A673 (cell line): ENCODE measurements at regions of chr9 and their contacts with region 1.

Region 1: GRCh38 chr9:78044189-78044588 is 12.6 kb upstream of the GNAQ start:
- DNase-seq: no peak
- H3K4me3 ChIP-seq: no peak overlapping the region
- H3K27ac ChIP-seq: no peak overlapping the region
- H3K4me1 ChIP-seq: peaks cover 9% of the 10 kb centered on the region
- H3K27me3 ChIP-seq: no peaks in the 10 kb centered on the region
- CTCF ChIP-seq: no peak

Region 2: DNA sequence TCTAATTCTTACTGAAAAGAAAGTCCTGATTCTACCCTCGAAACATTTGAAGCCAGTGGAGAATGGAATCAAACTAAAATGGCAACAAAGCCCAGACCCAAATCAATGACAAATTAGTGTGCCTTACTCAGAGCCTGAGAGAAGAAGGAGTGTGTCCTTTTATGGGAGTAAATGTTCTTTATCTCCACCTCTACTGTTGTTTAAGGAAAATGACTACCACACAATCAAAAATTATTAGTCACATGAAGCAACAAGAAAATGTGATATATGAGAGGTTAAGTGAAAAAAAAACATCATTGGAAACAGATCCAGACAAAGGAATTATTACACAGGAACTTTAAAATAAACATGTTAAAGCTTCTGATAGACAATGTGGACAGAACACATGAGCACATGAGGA is 1074.5 kb before region 1 on chr9:
- CTCF ChIA-PET with region 1: no interaction called
- POLR2A ChIA-PET with region 1: no interaction called
- intact Hi-C with region 1: no loop called
- DNase-seq: no peak
- H3K4me3 ChIP-seq: no peak overlapping the region
- H3K27ac ChIP-seq: no peak overlapping the region
- H3K4me1 ChIP-seq: no peaks in the 10 kb centered on the region
- H3K27me3 ChIP-seq: peaks cover 47% of the 10 kb centered on the region
- CTCF ChIP-seq: no peak

Region 3: DNA sequence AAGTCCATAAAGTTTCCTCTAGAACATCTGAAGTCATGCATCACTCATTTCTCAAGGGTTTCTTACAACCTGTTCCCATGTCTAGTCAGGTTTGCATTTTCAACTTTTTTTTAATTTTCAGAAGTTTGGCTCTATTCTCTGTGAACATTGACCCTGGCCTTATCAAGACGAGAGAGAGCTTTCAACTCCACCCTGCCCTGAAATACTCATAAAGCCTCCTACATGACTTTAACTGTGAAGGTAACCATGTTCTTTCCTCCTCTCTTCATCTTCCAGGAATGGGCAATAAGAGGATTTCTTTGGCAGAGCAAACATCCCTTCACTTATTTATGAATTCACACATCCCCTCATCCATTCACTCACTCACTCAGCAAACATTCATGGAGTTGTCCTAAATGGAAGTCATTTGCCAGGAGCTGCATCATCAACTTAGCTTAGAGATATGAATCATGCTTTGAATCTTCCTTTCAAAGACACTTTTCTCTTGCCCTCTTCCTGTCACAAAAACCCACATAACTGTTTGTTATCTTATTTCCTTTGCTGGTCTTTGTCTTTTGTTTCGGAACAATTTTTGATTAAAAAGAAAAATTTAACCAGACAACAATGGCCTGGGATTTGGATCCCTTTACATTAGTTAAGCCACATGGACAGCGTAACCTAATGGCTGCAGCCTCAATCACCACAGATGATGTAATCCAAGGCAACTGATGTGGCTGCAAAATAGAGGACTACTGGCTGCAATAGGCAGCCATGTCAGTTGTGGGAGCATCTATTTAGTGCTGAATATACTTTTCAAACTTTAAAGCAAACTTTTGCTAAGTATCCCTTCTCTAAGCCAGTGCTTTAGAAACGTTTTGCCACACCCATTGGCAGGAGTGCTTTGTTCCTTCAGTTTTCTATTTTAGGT is 30.4 kb after region 1 on chr9:
- CTCF ChIA-PET with region 1: no interaction called
- POLR2A ChIA-PET with region 1: no interaction called
- intact Hi-C with region 1: loop called (anchors 5 kb)
- DNase-seq: no peak
- H3K4me3 ChIP-seq: no peak overlapping the region
- H3K27ac ChIP-seq: no peak overlapping the region
- H3K4me1 ChIP-seq: no peaks in the 10 kb centered on the region
- H3K27me3 ChIP-seq: no peaks in the 10 kb centered on the region
- CTCF ChIP-seq: no peak

Region 4: DNA sequence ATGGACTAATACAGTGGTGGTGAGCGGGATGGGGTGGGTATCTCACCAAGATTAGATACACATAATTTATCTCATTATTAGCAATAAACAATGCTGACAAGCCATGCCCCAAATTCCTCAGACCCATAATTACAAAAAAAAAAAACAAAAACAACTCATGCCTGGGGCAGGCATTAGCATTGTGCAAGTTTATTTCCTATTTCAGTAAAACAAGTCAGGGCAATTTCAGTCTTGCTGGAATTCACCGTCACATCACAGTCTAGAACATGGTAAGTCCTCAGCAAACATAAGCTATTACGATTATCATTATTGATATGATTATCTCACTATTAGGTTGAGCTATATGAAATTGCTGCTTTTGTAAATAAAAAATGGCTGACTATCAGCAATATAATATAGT is 44.9 kb after region 1 on chr9:
- CTCF ChIA-PET with region 1: no interaction called
- POLR2A ChIA-PET with region 1: no interaction called
- intact Hi-C with region 1: loop called (anchors 5 kb)
- DNase-seq: no peak
- H3K4me3 ChIP-seq: no peak overlapping the region
- H3K27ac ChIP-seq: no peak overlapping the region
- H3K4me1 ChIP-seq: no peaks in the 10 kb centered on the region
- H3K27me3 ChIP-seq: no peaks in the 10 kb centered on the region
- CTCF ChIP-seq: no peak

Region 5: GRCh38 chr9:78207319-78207718 is 163.1 kb after region 1 on chr9:
- CTCF ChIA-PET with region 1: no interaction called
- POLR2A ChIA-PET with region 1: no interaction called
- intact Hi-C with region 1: no loop called
- DNase-seq: no peak
- H3K4me3 ChIP-seq: no peak overlapping the region
- H3K27ac ChIP-seq: no peak overlapping the region
- H3K4me1 ChIP-seq: no peaks in the 10 kb centered on the region
- H3K27me3 ChIP-seq: no peaks in the 10 kb centered on the region
- CTCF ChIP-seq: no peak